Activated naive CD8-positive, alpha-beta T cell treated with anti-CD3 and anti-CD28 coated beads, Interleukin-2, amount 10 ng/mL, durations not matched to agents 7 days and 5 days (primary cell): ENCODE measurements at regions of chr3 and their contacts with region 1.

Region 1: DNA sequence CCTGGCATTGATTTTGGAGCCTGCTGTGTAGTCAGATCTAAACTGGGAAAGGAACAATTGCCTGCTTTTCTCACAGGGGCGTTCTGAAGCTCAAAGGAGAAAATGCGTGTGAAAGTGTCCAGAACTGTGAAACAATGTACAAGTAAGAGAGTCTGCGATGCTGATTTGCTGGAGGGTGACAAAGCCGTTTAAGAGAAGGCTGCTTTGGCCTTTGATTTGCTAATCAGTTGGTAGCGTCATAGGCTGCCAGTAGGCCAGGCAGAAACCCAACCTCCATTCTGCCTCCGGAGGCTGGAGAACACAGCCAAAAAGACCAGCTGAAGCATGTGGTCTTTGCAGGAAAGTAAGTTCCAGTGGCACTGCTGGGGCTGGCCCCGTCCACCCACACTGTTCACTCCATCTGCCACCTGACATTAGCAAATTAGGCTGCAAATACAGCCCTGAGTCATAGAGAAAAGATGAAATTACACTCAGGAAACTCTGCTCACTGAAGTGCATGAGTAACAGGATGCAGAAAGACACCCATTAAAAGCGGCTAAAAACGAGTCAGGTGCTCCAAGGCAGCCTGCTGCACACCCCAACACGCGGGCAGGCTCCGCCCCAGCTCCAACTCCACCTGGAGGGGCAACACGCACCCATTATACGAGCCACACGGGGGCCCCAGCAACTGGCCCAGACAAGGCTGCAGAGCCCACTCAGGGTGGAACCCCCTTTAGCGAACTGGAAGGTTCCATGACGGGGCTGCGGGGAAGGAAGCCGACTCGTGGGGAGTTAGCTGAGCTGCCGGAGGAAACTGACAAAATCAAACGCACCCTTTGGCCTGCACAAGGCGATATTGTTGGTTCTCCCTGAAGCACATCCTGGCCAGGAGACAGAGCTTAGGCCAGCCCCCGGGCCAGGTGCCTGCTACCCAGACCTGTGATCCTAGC is 31.6 kb downstream of the ZDHHC19 start:
- DNase-seq: peak; percentile 89
- ATAC-seq: peak; percentile 85
- H3K4me3 Mint-ChIP-seq: peak overlapping the region; percentile 60
- H3K27ac Mint-ChIP-seq: peak overlapping the region; percentile 98
- H3K4me1 Mint-ChIP-seq: peaks cover 50% of the 10 kb centered on the region
- H3K27me3 Mint-ChIP-seq: no peaks in the 10 kb centered on the region

Region 2: GRCh38 chr3:196081791-196082618 is 97.6 kb before region 1 on chr3 and contains the start of gene TFRC:
- POLR2A ChIA-PET with region 1: interaction called, 19 read pairs
- DNase-seq: peak; percentile 98
- ATAC-seq: peak; percentile 87
- H3K4me3 Mint-ChIP-seq: peak within 1 kb of the TSS; percentile 99
- H3K27ac Mint-ChIP-seq: peak within 1 kb of the TSS; percentile 94
- H3K4me1 Mint-ChIP-seq: peaks cover 34% of the 10 kb centered on the region
- H3K27me3 Mint-ChIP-seq: no peaks in the 10 kb centered on the region
- total RNA-seq, gene TFRC: 168 to 171 TPM

Region 3: GRCh38 chr3:196120271-196120966 is 59.2 kb before region 1 on chr3:
- POLR2A ChIA-PET with region 1: interaction called, 10 read pairs
- DNase-seq: no peak
- ATAC-seq: peak; percentile 79
- H3K4me3 Mint-ChIP-seq: peak overlapping the region; percentile 63
- H3K27ac Mint-ChIP-seq: peak overlapping the region; percentile 80
- H3K4me1 Mint-ChIP-seq: peaks cover 31% of the 10 kb centered on the region
- H3K27me3 Mint-ChIP-seq: no peaks in the 10 kb centered on the region

Region 4: DNA sequence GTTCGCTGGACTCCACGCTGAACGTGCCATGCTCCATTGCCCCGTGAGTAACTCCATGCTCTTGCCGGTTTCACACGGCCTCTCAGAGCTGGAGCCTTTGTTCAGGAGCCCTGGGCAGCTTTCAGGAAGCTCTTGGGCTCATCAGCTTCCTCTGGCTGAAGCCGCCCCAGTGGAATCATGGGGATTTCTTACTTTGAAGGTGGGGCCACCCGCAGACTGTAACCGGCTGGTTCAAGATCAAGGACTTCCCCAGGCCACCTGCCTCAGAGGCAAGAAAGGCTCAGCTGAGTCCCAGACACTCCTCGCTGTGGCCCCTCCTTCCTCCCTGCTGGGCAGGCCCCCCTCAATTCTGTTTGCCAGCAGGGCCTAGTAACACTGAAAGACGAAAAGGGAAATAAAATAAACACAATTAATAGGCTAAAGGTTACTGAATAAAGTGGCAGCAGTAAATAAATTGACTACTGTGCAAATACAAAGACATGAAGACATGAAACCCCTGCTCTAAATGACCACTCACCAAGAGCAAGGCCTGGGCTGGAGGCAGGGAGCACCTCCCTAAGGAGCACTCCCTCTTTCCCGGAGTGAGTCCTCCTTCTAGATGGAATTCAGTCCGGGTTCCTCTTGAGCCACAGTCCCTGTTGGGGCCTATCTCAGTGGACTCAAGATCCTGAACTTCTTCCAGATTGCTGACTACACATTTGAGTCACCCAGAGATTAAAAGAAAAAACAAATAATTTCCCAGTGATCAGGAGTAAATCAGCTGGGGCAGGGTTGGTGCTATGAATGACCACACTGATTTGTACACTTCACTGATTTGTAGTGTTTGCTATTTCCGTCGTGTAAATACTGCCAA is 19.5 kb before region 1 on chr3:
- POLR2A ChIA-PET with region 1: interaction called, 27 read pairs
- DNase-seq: peak; percentile 52
- ATAC-seq: peak; percentile 94
- H3K4me3 Mint-ChIP-seq: peak overlapping the region; percentile 30
- H3K27ac Mint-ChIP-seq: peak overlapping the region; percentile 15
- H3K4me1 Mint-ChIP-seq: peaks cover 24% of the 10 kb centered on the region
- H3K27me3 Mint-ChIP-seq: no peaks in the 10 kb centered on the region

Region 5: DNA sequence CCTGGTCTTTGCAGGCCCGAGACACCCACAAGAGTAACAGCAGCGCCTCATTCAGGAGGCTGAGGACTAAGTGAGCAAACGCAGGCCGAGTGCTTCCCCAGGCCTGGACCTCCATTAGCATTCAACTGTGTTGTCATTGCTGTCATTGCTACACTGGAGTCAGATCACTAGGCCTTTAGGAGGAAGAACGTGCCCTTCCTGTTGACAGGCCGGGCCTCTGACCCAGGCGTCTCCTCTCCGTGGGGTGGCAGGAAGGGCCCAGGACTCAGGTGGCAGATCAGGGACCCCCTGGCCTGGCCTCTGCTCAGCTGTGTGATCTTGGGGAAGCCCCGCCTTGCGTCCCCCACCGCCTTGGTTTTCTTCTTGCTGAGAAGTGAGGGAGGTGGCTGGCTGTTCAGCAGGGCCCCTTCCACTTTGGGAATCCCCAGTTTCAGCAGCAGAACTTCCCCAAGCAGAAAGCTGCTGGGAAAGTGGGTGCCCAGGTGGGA is 12.4 kb after region 1 on chr3:
- POLR2A ChIA-PET with region 1: interaction called, 24 read pairs
- DNase-seq: peak; percentile 63
- ATAC-seq: peak; percentile 34
- H3K4me3 Mint-ChIP-seq: peak overlapping the region; percentile 35
- H3K27ac Mint-ChIP-seq: peak overlapping the region; percentile 93
- H3K4me1 Mint-ChIP-seq: peaks cover 23% of the 10 kb centered on the region
- H3K27me3 Mint-ChIP-seq: no peaks in the 10 kb centered on the region